ENCODE measurements at regions of chr2 and their contacts with region 1.

Region 1: GRCh38 chr2:75676464-75676863 is 29.9 kb downstream of the MRPL19 start:
- DNase-seq: no peak
- H3K4me3 ChIP-seq: no peak overlapping the region
- H3K27ac ChIP-seq: no peak overlapping the region
- H3K4me1 ChIP-seq: no peaks in the 10 kb centered on the region
- H3K27me3 ChIP-seq: no peaks in the 10 kb centered on the region
- CTCF ChIP-seq: no peak
- POLR2A ChIP-seq: no peak

Region 2: DNA sequence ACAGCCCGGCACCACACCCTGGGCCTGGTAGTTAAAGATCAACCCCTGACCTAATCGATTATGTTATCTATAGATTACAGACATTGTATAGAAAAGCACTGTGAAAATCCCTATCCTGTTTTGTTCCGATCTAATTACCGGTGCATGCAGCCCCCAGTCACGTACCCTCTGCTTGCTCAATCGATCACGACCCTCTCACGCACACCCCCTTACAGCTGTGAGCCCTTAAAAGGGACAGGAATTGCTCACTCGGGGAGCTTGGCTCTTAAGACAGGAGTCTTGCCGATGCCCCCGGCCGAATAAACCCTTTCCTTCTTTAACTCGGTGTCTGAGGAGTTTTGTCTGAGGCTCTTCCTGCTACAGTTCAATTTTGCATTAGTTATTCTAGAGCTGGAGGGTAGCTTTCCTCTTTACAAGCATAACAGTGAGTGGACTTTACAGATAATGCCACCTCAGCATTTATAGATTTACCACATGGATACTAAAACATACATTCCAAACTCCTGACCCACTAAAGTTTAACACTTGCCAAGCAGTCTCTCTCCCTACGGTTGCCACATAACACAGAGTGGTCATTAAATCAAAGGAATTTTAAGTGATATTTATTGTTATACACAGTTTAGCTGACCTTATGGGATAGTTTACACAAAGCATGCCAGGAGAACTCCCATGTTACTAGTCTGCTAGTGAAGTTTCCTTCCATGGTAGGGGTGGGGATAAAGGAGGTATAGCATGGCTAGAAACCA is 216.7 kb before region 1 on chr2:
- CTCF ChIA-PET with region 1: no interaction called
- POLR2A ChIA-PET with region 1: no interaction called
- dilution Hi-C with region 1: no loop called
- intact Hi-C with region 1: no loop called
- DNase-seq: no peak
- H3K4me3 ChIP-seq: no peak overlapping the region
- H3K27ac ChIP-seq: no peak overlapping the region
- H3K4me1 ChIP-seq: no peaks in the 10 kb centered on the region
- H3K27me3 ChIP-seq: peaks cover 13 to 21% of the 10 kb centered on the region in 2 experiments
- CTCF ChIP-seq: no peak
- POLR2A ChIP-seq: no peak

Region 3: GRCh38 chr2:75655861-75656260 is 20.6 kb before region 1 on chr2:
- CTCF ChIA-PET with region 1: interaction called, 11 read pairs
- POLR2A ChIA-PET with region 1: no interaction called
- dilution Hi-C with region 1: no loop called
- intact Hi-C with region 1: no loop called
- DNase-seq: no peak
- H3K4me3 ChIP-seq: no peak overlapping the region
- H3K27ac ChIP-seq: no peak overlapping the region
- H3K4me1 ChIP-seq: no peaks in the 10 kb centered on the region
- H3K27me3 ChIP-seq: no peaks in the 10 kb centered on the region
- CTCF ChIP-seq: no peak
- POLR2A ChIP-seq: no peak

Region 4: DNA sequence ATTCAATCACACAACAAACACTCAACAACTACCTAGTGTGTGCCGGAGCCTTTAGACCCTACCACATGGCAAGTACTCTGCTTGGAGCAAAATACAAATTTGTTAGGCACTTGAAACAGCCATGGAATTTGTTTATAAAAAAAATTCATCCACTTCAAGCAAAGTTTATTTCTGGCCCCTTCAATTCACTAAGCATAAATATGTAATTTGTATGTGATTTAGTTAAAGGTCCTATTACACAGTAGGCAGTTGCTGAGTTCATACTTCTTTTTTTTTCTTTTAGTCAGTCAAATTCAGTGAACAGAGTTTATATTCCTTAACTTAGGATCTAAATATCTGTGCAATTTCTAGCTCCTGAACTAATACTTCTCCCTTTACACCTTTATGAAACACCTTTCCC is 11.7 kb after region 1 on chr2:
- CTCF ChIA-PET with region 1: interaction called, 10 read pairs
- POLR2A ChIA-PET with region 1: no interaction called
- dilution Hi-C with region 1: no loop called
- intact Hi-C with region 1: no loop called
- DNase-seq: no peak
- H3K4me3 ChIP-seq: no peak overlapping the region
- H3K27ac ChIP-seq: no peak overlapping the region
- H3K4me1 ChIP-seq: no peaks in the 10 kb centered on the region
- H3K27me3 ChIP-seq: no peaks in the 10 kb centered on the region
- CTCF ChIP-seq: no peak
- POLR2A ChIP-seq: no peak

Measured in endothelial cell of umbilical vein (primary cell).